ENCODE measurements at regions of chr1 and their contacts with region 1.

Region 1: GRCh38 chr1:145978854-145979759 is 14.6 kb downstream of the POLR3GL start:
- DNase-seq: peak; percentile 92 to 95
- ATAC-seq: peak; percentile 95
- H3K4me3 ChIP-seq: no peak overlapping the region
- H3K27ac ChIP-seq: peak overlapping the region; percentile 91 to 100
- H3K4me1 ChIP-seq: peaks cover 6 to 14% of the 10 kb centered on the region in 2 donors
- H3K27me3 ChIP-seq: no peaks in the 10 kb centered on the region

Region 2: GRCh38 chr1:145936247-145936646 is 42.9 kb before region 1 on chr1:
- intact Hi-C with region 1: no loop called
- DNase-seq: no peak
- ATAC-seq: no peak
- H3K4me3 ChIP-seq: no peak overlapping the region
- H3K27ac ChIP-seq: no peak overlapping the region
- H3K4me1 ChIP-seq: no peaks in the 10 kb centered on the region
- H3K27me3 ChIP-seq: no peaks in the 10 kb centered on the region

Region 3: GRCh38 chr1:145996433-145997015 is 17.4 kb after region 1 on chr1 and contains the start of gene TXNIP:
- intact Hi-C with region 1: loop called in 1 of 2 experiments (anchors 2 kb)
- DNase-seq: peak; percentile 99
- ATAC-seq: peak; percentile 95
- H3K4me3 ChIP-seq: peak within 1 kb of the TSS; percentile 73 to 90
- H3K27ac ChIP-seq: peak within 1 kb of the TSS; percentile 61 to 71
- H3K4me1 ChIP-seq: peaks cover 8 to 20% of the 10 kb centered on the region in 2 donors
- H3K27me3 ChIP-seq: no peaks in the 10 kb centered on the region
- total RNA-seq, gene TXNIP: 354 to 536 TPM

Region 4: DNA sequence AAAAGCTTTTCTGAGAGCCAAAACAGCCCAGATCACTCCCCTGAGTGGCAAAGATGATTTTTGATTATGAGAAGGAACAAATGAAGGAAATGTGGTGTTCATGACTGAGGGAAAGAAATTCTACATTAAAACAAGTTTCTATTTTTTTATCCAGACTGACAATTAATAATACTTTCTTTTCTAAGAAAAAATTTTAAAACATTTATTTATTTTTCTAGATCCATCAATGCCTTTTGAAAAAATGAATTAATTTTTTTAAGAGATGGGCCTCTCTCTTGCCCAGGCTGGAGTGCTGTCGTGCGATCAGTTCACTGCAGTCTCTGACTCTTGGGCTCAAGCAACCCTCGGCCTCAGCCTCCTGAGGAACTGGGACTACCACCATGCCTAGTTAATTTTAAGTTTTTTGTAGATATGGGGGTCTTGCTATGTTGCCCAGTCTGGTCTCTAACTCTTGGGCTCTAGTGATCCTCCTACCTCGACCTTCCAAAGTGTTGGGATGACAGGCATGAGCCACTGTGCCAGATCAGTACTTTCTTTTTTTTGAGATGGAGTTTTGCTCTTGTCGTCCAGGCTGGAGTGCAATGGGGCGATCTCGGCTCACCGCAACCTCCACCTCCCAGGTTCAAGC is 28.5 kb after region 1 on chr1:
- intact Hi-C with region 1: loop called (anchors 1 to 2 kb)
- DNase-seq: no peak
- ATAC-seq: no peak
- H3K4me3 ChIP-seq: no peak overlapping the region
- H3K27ac ChIP-seq: no peak overlapping the region
- H3K4me1 ChIP-seq: no peaks in the 10 kb centered on the region
- H3K27me3 ChIP-seq: no peaks in the 10 kb centered on the region

Measured in aorta (tissue), 5 donors.